ENCODE measurements at regions of chr15 and their contacts with region 1.

Region 1: GRCh38 chr15:77543159-77543882 is 89.4 kb downstream of the LINGO1 start:
- DNase-seq: peak; percentile 64
- H3K4me3 ChIP-seq: peak overlapping the region; percentile 54
- H3K27ac ChIP-seq: peak overlapping the region; percentile 11
- H3K27me3 ChIP-seq: peaks cover 3% of the 10 kb centered on the region
- CTCF ChIP-seq: peak; percentile 99

Region 2: GRCh38 chr15:76941636-76942035 is 601.7 kb before region 1 on chr15:
- CTCF ChIA-PET with region 1: interaction called, 16 read pairs
- POLR2A ChIA-PET with region 1: no interaction called
- DNase-seq: no peak
- H3K4me3 ChIP-seq: no peak overlapping the region
- H3K27ac ChIP-seq: no peak overlapping the region
- H3K27me3 ChIP-seq: no peaks in the 10 kb centered on the region
- CTCF ChIP-seq: no peak

Region 3: GRCh38 chr15:77118882-77119321 is 424.4 kb before region 1 on chr15:
- CTCF ChIA-PET with region 1: interaction called, 95 read pairs
- POLR2A ChIA-PET with region 1: interaction called, 3 read pairs
- DNase-seq: peak; percentile 54
- H3K4me3 ChIP-seq: no peak overlapping the region
- H3K27ac ChIP-seq: no peak overlapping the region
- H3K27me3 ChIP-seq: no peaks in the 10 kb centered on the region
- CTCF ChIP-seq: peak; percentile 82

Region 4: DNA sequence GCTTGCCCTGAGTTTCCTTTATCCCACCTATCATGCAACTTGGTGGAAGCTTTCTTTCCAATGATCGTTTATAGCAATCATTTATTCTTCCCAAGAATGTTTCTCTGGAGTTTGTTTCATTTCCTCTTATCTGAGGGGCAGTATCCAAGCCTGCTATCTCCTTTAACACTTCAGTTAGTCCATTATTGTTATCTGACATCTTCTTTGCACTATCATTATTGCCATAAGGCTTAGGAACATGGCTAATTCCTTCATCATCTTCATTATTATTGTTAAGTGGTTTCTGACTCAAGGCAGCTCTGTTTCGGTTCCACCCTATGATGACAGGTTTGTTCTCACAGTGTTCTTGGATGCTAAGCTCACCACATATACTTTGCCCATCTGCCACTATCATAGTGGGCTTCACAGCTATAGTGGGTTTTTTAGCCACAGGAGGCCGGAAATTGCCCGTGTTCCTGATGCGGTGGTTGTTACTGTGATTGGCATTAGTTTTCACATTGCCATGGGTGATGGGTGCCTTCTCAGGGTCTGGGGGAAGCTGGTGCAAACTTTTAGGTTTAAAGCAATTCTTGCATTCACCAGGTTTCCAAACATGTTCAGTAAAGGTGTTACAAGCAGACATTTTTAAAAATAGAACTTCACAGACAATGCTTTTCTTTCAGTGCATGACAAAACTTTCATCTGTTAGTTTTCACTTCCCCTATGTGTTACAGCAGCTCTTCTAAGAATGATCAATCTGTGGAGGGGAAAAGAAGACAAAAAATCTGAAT is 361.8 kb before region 1 on chr15:
- CTCF ChIA-PET with region 1: interaction called, 61 read pairs
- POLR2A ChIA-PET with region 1: no interaction called
- DNase-seq: no peak
- H3K4me3 ChIP-seq: no peak overlapping the region
- H3K27ac ChIP-seq: no peak overlapping the region
- H3K27me3 ChIP-seq: no peaks in the 10 kb centered on the region
- CTCF ChIP-seq: no peak

Region 5: GRCh38 chr15:77436822-77437221 is 106.5 kb before region 1 on chr15:
- CTCF ChIA-PET with region 1: no interaction called
- POLR2A ChIA-PET with region 1: no interaction called
- DNase-seq: no peak
- H3K4me3 ChIP-seq: no peak overlapping the region
- H3K27ac ChIP-seq: no peak overlapping the region
- H3K27me3 ChIP-seq: no peaks in the 10 kb centered on the region
- CTCF ChIP-seq: no peak

Region 6: DNA sequence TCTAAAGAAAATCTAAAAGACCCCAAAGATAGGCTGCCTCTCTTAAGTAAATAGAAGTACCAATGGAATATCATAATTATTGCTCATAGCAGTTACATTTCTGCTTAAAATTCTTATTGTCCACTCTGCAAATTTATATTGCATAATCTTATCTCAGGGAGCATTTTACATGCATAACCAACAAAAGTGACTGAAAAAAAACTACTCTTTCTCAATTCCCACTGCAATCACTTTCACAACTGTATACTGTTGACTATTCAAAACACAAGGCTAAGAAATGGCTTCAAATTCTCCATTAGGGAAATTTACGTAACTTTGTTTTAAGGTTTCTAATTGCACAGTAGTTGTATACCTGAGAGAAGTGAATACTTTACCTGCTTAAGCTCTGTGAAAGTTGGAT is 66.3 kb before region 1 on chr15:
- CTCF ChIA-PET with region 1: interaction called, 10 read pairs
- POLR2A ChIA-PET with region 1: no interaction called
- DNase-seq: no peak
- H3K4me3 ChIP-seq: no peak overlapping the region
- H3K27ac ChIP-seq: no peak overlapping the region
- H3K27me3 ChIP-seq: no peaks in the 10 kb centered on the region
- CTCF ChIP-seq: no peak

Region 7: DNA sequence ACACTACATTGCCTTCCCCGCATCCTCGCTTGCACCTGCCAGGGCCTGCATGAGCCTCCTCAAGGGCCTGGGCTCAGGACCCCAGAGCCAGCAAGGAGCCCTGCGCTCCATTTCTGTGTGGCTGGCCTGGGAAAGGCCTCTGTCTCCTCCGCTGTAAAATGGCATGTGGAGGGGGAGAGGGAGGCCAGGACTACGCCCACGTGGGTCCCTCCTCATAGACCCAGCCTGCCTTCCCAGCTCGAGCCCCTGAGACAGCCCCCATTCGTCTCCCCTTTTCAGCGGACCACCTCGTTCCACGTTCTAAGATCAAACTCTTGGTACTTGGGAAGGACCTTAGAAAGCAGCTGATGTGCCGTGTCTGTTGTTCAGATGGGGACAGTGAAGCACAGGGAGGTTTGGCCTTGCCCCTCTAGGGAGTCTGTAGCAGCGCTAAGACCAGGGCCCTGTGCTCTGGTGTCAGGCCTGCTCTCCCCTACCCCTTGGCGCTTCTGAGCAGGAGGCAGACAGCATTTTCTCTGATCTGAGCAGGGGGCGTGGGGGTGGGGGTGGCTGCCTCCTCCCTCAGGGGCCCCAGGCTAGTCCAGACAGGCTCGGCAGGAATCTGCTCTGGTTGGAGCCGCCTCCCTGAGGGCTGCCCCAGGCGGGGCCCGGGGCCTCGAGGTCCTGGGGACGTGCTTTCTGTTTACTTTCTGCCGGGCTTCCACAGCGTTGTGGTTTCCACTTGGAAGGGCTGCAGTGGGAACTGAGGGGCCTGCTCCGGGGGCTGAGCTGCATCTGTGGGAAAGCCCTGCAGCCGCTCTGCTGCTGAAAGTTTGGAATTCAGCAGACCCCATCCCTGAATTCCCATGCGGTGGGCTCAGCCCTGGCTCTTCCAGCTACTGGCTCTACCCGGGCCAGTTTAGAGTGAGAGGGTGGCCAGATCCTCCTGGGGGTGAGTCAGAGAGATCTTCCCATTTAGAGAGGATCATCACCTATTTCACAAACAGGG is 16.2 kb before region 1 on chr15:
- CTCF ChIA-PET with region 1: interaction called, 15 read pairs
- POLR2A ChIA-PET with region 1: no interaction called
- DNase-seq: peak; percentile 59
- H3K4me3 ChIP-seq: no peak overlapping the region
- H3K27ac ChIP-seq: peak overlapping the region; percentile 70
- H3K27me3 ChIP-seq: peaks cover 4% of the 10 kb centered on the region
- CTCF ChIP-seq: no peak

Region 8: GRCh38 chr15:77641999-77642398 is 98.7 kb after region 1 on chr15:
- CTCF ChIA-PET with region 1: no interaction called
- POLR2A ChIA-PET with region 1: no interaction called
- DNase-seq: no peak
- H3K4me3 ChIP-seq: no peak overlapping the region
- H3K27ac ChIP-seq: no peak overlapping the region
- H3K27me3 ChIP-seq: peaks cover 39% of the 10 kb centered on the region
- CTCF ChIP-seq: no peak

Measured in AG04450 (cell line).